ENCODE measurements at regions of chr6 and their contacts with region 1.

Region 1: DNA sequence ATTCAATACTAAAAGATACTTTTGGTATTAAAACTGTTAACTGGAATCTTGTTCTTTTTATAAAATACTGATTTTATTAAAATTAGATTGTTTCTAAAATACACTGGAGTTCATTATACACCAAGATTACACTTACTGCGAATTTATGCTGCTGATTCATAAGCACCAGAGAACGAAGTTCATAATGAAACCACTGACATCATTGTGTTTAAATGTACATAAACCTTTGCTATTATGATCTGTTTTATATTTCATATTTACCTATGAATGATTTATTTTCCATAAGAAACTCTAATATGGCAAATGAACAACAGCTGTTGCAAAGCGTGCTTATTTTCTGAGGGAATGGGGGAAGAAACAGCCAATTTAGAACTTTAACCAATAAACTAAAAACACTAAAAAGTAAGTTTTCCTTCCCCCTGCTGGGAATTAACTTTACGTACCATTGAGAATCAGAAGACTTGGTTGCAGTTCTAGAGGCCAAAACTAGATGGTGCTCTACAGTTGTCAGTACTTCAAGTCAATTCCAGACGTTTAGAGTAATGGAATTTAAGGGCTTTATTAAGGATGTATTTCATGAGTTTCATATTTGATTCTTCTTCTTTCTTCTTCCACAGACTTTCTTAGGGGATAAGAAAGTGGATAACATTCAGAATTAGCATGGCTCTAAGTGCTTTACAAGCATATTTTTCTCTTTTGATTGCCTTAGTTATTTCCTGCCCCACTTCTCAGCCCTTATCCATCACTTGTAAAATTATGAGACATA is 30.8 kb upstream of the COL19A1 start:
- DNase-seq: no peak
- H3K4me3 Mint-ChIP-seq: no peak overlapping the region
- H3K27ac Mint-ChIP-seq: no peak overlapping the region
- H3K4me1 Mint-ChIP-seq: peaks cover 4% of the 10 kb centered on the region
- H3K27me3 Mint-ChIP-seq: peaks cover 15% of the 10 kb centered on the region

Region 2: GRCh38 chr6:69732640-69733039 is 103.0 kb before region 1 on chr6:
- CTCF ChIA-PET with region 1: no interaction called
- POLR2A ChIA-PET with region 1: no interaction called
- intact Hi-C with region 1: loop called (anchors 2 kb)
- DNase-seq: no peak
- H3K4me3 Mint-ChIP-seq: no peak overlapping the region
- H3K27ac Mint-ChIP-seq: no peak overlapping the region
- H3K4me1 Mint-ChIP-seq: no peaks in the 10 kb centered on the region
- H3K27me3 Mint-ChIP-seq: no peaks in the 10 kb centered on the region

Region 3: DNA sequence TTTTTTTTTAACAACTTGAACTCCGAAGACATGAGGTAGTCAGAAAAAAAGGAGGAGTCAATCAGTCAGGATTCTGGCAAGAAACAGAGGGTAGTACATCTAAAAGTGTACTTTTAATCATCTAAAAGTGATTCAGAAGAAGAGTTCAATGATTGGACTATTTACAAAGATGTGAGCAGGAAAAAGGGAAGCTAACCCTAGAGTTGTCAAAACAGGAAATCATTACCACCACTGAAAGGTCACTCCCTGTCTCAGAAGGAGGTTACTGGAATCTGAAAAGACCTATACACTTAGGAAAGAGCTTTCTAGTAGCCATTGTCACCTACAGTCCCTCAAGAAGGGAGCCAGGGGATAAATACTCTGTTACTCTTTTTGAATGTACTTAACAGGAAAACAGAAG is 22.1 kb before region 1 on chr6:
- CTCF ChIA-PET with region 1: interaction called, 11 read pairs
- POLR2A ChIA-PET with region 1: no interaction called
- intact Hi-C with region 1: loop called (anchors 1 kb)
- DNase-seq: no peak
- H3K4me3 Mint-ChIP-seq: no peak overlapping the region
- H3K27ac Mint-ChIP-seq: peak overlapping the region; percentile 75
- H3K4me1 Mint-ChIP-seq: peaks cover 58% of the 10 kb centered on the region
- H3K27me3 Mint-ChIP-seq: no peaks in the 10 kb centered on the region

Region 4: GRCh38 chr6:69985180-69985579 is 149.6 kb after region 1 on chr6:
- CTCF ChIA-PET with region 1: no interaction called
- POLR2A ChIA-PET with region 1: no interaction called
- intact Hi-C with region 1: loop called (anchors 5 kb)
- DNase-seq: no peak
- H3K4me3 Mint-ChIP-seq: no peak overlapping the region
- H3K27ac Mint-ChIP-seq: no peak overlapping the region
- H3K4me1 Mint-ChIP-seq: no peaks in the 10 kb centered on the region
- H3K27me3 Mint-ChIP-seq: no peaks in the 10 kb centered on the region

Region 5: DNA sequence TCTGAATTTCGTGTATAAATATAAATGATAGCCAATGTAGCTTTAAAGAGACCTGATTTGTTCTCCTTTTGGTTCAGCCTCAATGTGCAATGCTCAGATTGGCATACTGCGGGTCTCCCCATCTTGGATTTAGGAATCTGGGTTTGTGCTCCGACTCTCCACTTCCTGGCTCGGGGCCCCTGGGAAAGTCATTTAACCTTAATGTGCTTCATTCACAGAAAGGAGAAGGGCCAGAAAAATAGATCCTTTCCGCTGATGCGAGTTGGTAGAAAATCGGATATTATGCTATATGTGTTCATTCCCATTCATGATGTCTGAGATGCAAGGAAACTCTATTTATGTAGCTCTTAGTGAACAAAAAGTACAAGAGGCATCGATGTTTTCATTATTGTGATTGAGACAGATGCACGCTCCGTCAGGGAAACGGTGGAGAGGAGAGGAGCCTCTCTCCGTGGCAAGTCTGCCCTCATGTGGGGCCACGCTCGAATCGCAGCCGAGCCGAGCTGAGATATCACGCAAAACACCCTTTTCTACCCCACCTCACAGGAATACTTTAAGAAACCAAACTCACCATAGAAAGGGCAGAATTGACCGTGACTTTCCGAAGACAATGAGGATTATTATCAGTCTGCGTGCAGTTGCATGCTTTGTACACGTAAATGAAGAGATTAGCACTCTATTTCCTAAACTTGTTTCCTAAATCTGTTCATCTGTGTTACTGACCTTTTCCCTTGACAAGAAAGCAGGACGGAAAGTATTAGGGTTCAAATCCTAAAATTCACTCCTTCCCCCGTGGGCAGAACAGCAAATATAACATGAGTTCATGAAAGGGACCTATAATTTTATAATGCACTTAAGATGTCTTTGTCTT is 330.7 kb after region 1 on chr6:
- CTCF ChIA-PET with region 1: interaction called, 3 read pairs
- POLR2A ChIA-PET with region 1: no interaction called
- intact Hi-C with region 1: loop called (anchors 2 kb)
- DNase-seq: peak; percentile 51
- H3K4me3 Mint-ChIP-seq: no peak overlapping the region
- H3K27ac Mint-ChIP-seq: no peak overlapping the region
- H3K4me1 Mint-ChIP-seq: peaks cover 3% of the 10 kb centered on the region
- H3K27me3 Mint-ChIP-seq: peaks cover 33% of the 10 kb centered on the region